Calu3 (cell line): ENCODE measurements at regions of chr7 and their contacts with region 1.

Region 1: DNA sequence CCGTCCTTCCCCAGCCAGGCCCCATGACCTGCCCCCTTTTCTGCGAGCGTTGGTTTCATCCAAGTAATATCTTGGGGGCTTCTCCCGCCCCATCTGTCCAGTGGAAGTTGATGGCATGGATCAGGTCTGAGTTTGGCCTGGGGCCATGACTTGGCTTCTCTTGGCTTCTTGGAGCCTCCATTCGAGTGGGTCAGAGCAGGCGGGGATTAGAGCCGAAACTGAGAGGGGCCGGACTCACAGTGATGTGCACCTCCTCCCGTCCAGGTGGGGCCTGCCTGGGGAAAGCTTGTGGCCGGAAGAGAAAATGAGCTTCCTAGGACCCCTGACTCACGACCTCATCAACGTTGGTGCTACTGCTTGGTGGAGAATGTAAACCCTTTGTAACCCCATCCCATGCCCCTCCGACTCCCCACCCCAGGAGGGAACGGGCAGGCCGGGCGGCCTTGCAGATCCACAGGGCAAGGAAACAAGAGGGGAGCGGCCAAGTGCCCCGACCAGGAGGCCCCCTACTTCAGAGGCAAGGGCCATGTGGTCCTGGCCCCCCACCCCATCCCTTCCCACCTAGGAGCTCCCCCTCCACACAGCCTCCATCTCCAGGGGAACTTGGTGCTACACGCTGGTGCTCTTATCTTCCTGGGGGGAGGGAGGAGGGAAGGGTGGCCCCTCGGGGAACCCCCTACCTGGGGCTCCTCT is 15.1 kb upstream of the LIMK1 start:
- DNase-seq: no peak
- H3K4me3 Mint-ChIP-seq: no peak overlapping the region
- H3K27ac Mint-ChIP-seq: no peak overlapping the region
- H3K4me1 Mint-ChIP-seq: no peaks in the 10 kb centered on the region
- H3K27me3 Mint-ChIP-seq: no peaks in the 10 kb centered on the region
- CTCF ChIP-seq: no peak

Region 2: DNA sequence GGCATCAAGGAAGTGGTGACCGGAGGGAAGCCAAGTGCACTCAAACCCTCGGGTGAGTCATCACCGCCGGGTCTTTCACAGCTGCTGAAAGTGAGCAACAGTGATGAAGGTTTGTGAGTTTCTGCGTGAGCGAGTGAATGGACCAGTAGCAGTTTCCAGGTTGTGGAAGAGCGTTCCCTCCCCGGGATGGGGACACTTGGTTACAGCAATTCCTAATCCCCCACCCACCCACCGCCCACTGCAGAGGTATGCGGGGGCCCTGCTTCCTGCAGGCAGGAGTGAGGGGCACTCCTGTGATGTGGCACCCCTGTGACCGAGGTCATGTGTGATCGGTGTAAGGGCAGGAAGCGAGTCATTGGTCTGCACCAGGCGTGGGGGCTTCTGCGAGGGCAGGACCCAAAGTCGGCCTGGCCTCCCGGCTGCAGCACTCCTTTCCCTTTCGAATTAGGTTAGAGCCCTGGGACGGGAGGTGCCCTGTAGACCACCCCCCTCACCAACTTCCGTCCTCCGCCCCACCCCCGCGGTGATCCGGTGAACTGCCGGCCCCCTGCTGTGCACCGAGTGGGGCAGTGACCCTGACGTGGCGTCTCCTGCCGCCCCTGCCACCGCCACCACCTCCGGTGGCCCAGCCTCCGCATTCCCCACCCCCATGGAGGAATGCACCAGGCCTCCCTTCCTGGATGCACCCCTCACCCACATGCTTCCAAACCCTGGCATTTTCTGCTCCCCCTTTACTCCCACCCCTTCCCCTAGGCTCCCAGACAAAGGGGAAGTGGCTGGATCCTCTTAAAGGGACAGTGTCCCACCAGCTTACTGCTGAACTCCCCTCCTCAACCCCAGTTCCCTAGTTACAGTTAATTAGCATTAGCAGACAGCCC is 25.9 kb after region 1 on chr7:
- CTCF ChIA-PET with region 1: no interaction called
- intact Hi-C with region 1: no loop called
- DNase-seq: peak; percentile 73
- H3K4me3 Mint-ChIP-seq: peak overlapping the region; percentile 65
- H3K27ac Mint-ChIP-seq: peak overlapping the region; percentile 87
- H3K4me1 Mint-ChIP-seq: peaks cover 11% of the 10 kb centered on the region
- H3K27me3 Mint-ChIP-seq: no peaks in the 10 kb centered on the region
- CTCF ChIP-seq: no peak

Region 3: GRCh38 chr7:74183613-74184450 is 115.3 kb after region 1 on chr7:
- CTCF ChIA-PET with region 1: interaction called, 7 read pairs
- intact Hi-C with region 1: loop called (anchors 5 kb)
- DNase-seq: peak; percentile 43
- H3K4me3 Mint-ChIP-seq: no peak overlapping the region
- H3K27ac Mint-ChIP-seq: no peak overlapping the region
- H3K4me1 Mint-ChIP-seq: peaks cover 22% of the 10 kb centered on the region
- H3K27me3 Mint-ChIP-seq: no peaks in the 10 kb centered on the region
- CTCF ChIP-seq: no peak